Transverse colon (tissue), 4 donors: ENCODE measurements at regions of chr6 and their contacts with region 1.

Region 1: GRCh38 chr6:11575408-11576033 is 38.0 kb downstream of the TMEM170B start:
- DNase-seq: peak; percentile 57
- H3K4me3 ChIP-seq: no peak overlapping the region
- H3K27ac ChIP-seq: no peak overlapping the region
- H3K4me1 ChIP-seq: no peaks in the 10 kb centered on the region
- H3K27me3 ChIP-seq: no peaks in the 10 kb centered on the region
- CTCF ChIP-seq: peak; percentile 80 to 86 (median 84)
- EP300 ChIP-seq: no peak
- POLR2A ChIP-seq: no peak

Region 2: DNA sequence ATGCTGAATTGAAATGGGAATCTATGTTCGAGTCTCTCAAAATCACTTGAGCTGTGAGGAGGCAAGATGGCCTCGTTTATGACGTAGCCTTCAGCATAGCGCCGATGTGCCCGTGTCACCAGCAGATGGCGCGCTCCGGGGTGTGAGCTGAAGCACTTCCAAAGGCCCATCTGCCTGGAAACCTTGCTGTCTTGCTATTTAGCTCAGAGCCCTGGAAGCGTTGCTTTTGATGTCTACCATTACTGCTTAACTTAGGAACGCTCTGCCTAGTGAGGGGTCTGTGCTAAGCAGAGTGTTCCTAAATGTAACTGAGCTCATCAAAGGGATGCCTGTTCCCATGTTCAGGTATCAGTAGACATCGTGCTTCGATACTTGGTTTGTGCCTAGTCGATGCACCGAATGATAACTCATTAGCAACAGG is 620.9 kb before region 1 on chr6:
- in situ Hi-C with region 1: loop called in 2 of 4 experiments (anchors 10 kb)
- intact Hi-C with region 1: no loop called
- DNase-seq: peak; percentile 75
- H3K4me3 ChIP-seq: no peak overlapping the region
- H3K27ac ChIP-seq: no peak overlapping the region
- H3K4me1 ChIP-seq: no peaks in the 10 kb centered on the region
- H3K27me3 ChIP-seq: no peaks in the 10 kb centered on the region
- CTCF ChIP-seq: peak; percentile 51 to 75 (median 61)
- EP300 ChIP-seq: no peak
- POLR2A ChIP-seq: no peak

Region 3: GRCh38 chr6:11144393-11144851 is 431.1 kb before region 1 on chr6:
- in situ Hi-C with region 1: loop called in 1 of 4 experiments (anchors 10 kb)
- intact Hi-C with region 1: no loop called
- DNase-seq: peak; percentile 81
- H3K4me3 ChIP-seq: no peak overlapping the region
- H3K27ac ChIP-seq: no peak overlapping the region
- H3K4me1 ChIP-seq: peaks cover 0 to 6% (median 0%) of the 10 kb centered on the region in 4 donors
- H3K27me3 ChIP-seq: no peaks in the 10 kb centered on the region
- CTCF ChIP-seq: peak; percentile 86 to 94 (median 92)
- EP300 ChIP-seq: no peak
- POLR2A ChIP-seq: no peak

Region 4: DNA sequence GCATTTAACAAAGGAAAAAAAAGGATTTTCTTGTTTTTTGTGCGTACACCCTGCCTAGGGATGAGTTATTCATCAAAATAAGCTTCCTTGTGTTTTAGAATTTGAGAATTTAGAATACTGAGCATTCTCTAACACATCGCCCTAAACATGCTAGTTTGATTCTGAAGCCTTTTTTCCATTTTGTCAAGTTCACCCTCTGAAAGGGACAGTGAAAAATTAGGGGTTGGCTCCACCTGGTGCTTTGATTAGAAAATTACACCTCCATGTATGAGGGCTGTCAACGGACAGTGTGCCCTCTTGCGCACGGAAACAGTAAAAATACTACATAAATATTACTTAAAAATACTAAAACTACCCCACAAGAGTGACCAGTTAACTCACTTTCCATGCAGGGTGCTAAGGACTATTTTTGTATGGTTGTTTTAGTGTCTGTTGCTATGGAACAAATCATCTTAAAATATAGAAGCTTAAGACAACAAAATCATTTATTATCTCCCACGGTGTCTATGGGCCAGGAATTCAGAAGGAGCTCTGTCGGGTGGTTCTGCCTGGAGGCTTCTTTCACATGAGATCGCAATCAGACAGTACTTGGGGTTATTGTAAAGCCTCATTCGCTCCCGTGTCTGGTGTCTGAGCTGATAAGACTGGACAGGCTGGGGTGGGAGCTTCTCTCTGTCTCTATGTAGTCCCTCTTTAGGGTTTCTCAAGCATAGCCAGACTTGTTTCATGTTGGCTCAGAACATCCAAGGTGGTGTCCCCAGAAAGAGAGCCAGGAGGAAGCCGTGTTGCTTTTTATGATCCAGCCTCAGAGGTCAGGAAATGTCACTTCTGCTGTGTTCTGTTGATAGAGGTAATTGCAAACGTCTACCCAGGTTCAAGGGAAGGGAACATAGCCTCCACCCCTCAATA is 79.1 kb before region 1 on chr6:
- in situ Hi-C with region 1: loop called in 1 of 4 experiments (anchors 10 kb)
- intact Hi-C with region 1: no loop called
- DNase-seq: peak; percentile 74
- H3K4me3 ChIP-seq: no peak overlapping the region
- H3K27ac ChIP-seq: no peak overlapping the region
- H3K4me1 ChIP-seq: peaks cover 0 to 11% (median 7%) of the 10 kb centered on the region in 4 donors
- H3K27me3 ChIP-seq: no peaks in the 10 kb centered on the region
- CTCF ChIP-seq: peak; percentile 83 to 98 (median 86)
- EP300 ChIP-seq: no peak
- POLR2A ChIP-seq: no peak

Region 5: DNA sequence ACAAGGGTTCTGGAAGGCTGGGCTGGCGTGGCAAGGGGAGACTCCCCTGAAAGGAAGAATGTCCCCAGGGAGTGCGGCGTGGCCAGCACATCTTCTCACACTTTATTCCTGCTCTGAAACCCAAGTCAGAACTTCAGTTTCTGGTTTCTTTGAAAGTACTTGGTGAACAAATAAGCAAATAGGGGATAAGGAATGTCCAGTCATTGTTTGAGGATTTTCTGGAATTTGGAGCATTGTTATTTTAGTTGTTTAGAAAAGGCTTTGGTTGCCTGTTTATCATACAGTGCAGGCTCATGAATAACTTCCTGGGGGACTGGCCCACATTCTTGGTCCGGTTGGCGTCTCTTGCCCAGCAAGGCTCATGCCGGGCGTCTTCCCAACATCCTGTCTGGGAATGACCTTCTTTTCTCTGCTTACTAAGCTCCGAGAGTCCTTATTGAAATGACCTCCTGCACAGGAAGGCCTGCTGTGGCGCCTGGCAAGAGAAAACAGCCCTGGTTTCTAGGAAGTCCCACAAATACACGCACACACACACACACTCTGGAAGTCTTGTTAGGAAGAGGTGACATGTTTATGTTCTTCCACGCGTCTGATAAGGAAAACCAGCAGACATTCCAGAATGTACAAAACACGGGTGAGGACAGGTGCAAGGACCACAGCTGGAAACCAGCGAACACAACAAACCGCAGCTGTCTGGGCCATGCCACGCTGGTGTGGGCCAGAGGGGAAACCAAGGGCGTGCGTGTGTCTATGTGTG is 34.0 kb after region 1 on chr6:
- in situ Hi-C with region 1: no loop called
- intact Hi-C with region 1: no loop called
- DNase-seq: no peak
- H3K4me3 ChIP-seq: no peak overlapping the region
- H3K27ac ChIP-seq: peak overlapping the region in 1 of 4 donors; percentile 34
- H3K4me1 ChIP-seq: peaks cover 0 to 33% (median 3%) of the 10 kb centered on the region in 4 donors
- H3K27me3 ChIP-seq: no peaks in the 10 kb centered on the region
- CTCF ChIP-seq: no peak
- EP300 ChIP-seq: no peak
- POLR2A ChIP-seq: no peak

Region 6: DNA sequence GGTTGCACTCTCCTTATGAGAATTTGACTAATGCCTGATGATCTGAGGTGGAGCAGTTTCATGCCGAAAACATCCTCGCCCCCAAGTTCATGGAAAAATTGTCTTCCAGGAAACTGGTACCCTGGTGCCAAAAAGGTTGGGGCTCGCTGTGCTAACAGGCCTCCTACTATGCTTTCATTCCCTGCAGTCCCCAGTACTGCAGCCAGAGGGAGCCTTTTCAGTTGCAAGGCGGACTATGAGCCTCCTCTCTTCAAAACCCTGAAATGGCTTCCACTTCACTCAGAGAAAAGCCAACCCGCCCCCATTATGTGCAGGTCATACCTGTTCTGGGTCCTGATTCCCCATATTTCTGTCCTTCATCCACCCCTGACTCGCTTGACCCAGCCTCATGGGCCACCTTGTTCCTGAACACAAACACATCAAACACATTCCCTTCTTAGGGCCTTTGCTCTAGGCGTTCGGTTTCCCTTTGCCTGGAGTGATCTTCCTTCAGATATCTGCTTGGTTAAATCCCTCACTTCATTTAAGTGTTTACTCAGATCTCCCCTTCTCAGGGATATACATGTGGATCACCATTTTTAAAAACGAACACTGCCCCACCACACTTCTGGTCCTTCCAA is 1314.8 kb after region 1 on chr6:
- in situ Hi-C with region 1: loop called in 1 of 4 experiments (anchors 25 kb)
- intact Hi-C with region 1: no loop called
- DNase-seq: no peak
- H3K4me3 ChIP-seq: no peak overlapping the region
- H3K27ac ChIP-seq: no peak overlapping the region
- H3K4me1 ChIP-seq: peaks cover 0 to 11% (median 2%) of the 10 kb centered on the region in 4 donors
- H3K27me3 ChIP-seq: no peaks in the 10 kb centered on the region
- CTCF ChIP-seq: peak in 3 of 5 experiments; percentile 31 to 42 (median 35)
- EP300 ChIP-seq: no peak
- POLR2A ChIP-seq: no peak